ENCODE measurements at regions of chr20 and their contacts with region 1.

Region 1: DNA sequence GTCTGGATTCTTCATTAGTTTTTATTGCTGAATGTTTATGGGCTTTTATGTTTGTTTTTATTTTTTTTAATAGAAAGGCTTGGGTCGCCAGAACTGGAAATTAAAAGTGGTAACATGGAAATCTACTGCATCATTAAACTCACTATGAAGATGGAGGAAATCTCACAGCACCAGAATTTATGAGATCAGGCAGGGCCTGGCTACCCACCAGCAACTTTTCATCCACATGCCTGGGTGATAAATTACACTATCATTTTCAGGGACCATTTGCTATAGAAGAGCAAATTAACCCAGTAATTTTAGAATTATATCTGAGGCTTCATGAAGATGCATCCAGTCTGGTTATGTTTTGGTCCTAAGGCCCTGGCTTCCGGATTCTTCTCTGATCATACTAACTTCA is 57.8 kb upstream of the PLCB4 start:
- DNase-seq: no peak
- H3K4me3 ChIP-seq: no peak overlapping the region
- H3K27ac ChIP-seq: no peak overlapping the region
- H3K4me1 ChIP-seq: no peaks in the 10 kb centered on the region
- H3K27me3 ChIP-seq: no peaks in the 10 kb centered on the region
- CTCF ChIP-seq: no peak
- POLR2A ChIP-seq: no peak

Region 2: GRCh38 chr20:8523684-8524083 is 487.4 kb before region 1 on chr20:
- intact Hi-C with region 1: loop called (anchors 5 kb)
- DNase-seq: no peak
- H3K4me3 ChIP-seq: no peak overlapping the region
- H3K27ac ChIP-seq: no peak overlapping the region
- H3K4me1 ChIP-seq: no peaks in the 10 kb centered on the region
- H3K27me3 ChIP-seq: no peaks in the 10 kb centered on the region
- CTCF ChIP-seq: no peak
- POLR2A ChIP-seq: no peak

Region 3: DNA sequence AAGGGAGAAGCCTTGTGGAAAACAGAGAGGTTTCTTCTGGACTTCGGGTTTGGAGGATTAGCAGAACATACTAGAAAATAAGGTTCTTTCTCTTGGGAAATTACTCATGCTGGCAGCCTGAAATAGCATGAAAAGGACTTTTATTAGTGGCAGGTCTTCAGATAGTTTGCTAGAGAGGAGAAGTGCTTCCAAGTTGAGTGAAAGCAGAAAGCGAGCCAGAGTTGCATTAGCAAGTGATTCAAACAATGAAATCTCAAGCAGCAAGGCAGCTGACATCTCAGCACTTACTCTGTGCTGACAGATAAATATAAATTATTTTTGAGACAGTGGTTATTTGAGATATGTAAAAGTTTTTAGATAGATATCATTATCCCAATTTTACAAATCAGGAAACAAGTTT is 149.6 kb after region 1 on chr20:
- intact Hi-C with region 1: no loop called
- DNase-seq: no peak
- H3K4me3 ChIP-seq: peak overlapping the region in 1 of 2 donors; percentile 3
- H3K27ac ChIP-seq: peak overlapping the region; percentile 60
- H3K4me1 ChIP-seq: peaks cover 20% of the 10 kb centered on the region
- H3K27me3 ChIP-seq: no peaks in the 10 kb centered on the region
- CTCF ChIP-seq: no peak
- POLR2A ChIP-seq: no peak

Region 4: GRCh38 chr20:9241232-9241692 is 230.1 kb after region 1 on chr20:
- intact Hi-C with region 1: no loop called
- DNase-seq: no peak
- H3K4me3 ChIP-seq: no peak overlapping the region
- H3K27ac ChIP-seq: no peak overlapping the region
- H3K4me1 ChIP-seq: peaks cover 5% of the 10 kb centered on the region
- H3K27me3 ChIP-seq: no peaks in the 10 kb centered on the region
- CTCF ChIP-seq: no peak
- POLR2A ChIP-seq: no peak